GM10248 (cell line): ENCODE measurements at regions of chr17 and their contacts with region 1.

Region 1: GRCh38 chr17:66403846-66404556 is 101.6 kb downstream of the PRKCA start:
- DNase-seq: no peak
- CTCF ChIP-seq: no peak

Region 2: DNA sequence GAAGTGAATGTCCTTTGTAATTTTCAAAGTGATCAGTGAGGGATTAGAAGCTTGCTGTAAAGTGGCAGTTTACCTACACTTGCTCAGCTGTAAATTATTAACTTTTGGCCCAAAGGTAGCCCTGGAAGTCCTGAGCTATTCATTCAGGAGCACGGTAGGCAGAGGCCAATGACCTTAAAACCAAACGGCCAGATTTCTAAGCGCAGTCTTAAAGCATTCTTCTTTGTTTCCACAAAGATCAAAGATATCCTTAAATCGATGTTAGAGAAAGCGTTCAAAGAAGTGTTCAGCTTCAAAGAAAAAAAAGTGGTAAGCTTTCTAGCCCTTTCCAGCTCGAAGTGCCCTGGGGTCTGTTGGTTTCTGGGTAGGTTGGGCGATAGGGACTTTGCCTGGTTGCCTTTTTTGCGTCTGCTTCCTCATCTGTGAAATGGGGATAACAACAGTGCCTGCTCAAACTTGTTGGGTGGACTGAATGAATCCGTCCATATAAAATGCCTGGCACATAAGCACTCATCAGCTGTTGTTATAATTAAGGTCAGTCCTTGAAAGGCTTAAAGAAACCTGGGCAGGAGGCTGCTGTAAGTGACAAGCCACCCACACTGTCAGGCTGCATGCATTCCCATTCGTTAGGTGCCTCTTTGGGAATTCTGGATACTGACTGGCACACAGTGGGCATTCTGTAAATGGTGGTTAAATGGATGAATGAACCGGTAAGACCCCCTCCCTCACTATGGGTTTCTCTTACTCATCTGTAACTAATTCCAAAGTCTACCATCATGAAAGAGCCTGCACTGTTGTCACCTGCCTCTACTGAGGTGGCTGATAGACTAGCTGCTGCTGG is 11.6 kb after region 1 on chr17:
- CTCF ChIA-PET with region 1: interaction called, 11 read pairs
- POLR2A ChIA-PET with region 1: no interaction called
- DNase-seq: no peak
- CTCF ChIP-seq: no peak